Activated T-helper 1 cell treated with anti-CD3 and anti-CD28 coated beads, Interleukin-12 subunit alpha, Interleukin-12 subunit beta, Interleukin-2, Interleukin-4 antibody, amounts not matched to agents 30 ng/mL and 10 ng/mL and 1 ng/mL, durations not matched to agents 14 hours and 24 hours and 36 hours (primary cell): ENCODE measurements at regions of chr6 and their contacts with region 1.

Region 1: GRCh38 chr6:37018198-37019064 is 13.0 kb downstream of the FGD2 start:
- DNase-seq: peak; percentile 84
- H3K4me3 Mint-ChIP-seq: no peak overlapping the region
- H3K27ac Mint-ChIP-seq: peak overlapping the region; percentile 56
- H3K4me1 Mint-ChIP-seq: peaks cover 58% of the 10 kb centered on the region
- H3K27me3 Mint-ChIP-seq: no peaks in the 10 kb centered on the region

Region 2: GRCh38 chr6:36423101-36423824 is 595.2 kb before region 1 on chr6:
- intact Hi-C with region 1: no loop called
- DNase-seq: peak; percentile 97
- H3K4me3 Mint-ChIP-seq: peak overlapping the region; percentile 88
- H3K27ac Mint-ChIP-seq: peak overlapping the region; percentile 84
- H3K4me1 Mint-ChIP-seq: peaks cover 21% of the 10 kb centered on the region
- H3K27me3 Mint-ChIP-seq: peaks cover 11% of the 10 kb centered on the region

Region 3: DNA sequence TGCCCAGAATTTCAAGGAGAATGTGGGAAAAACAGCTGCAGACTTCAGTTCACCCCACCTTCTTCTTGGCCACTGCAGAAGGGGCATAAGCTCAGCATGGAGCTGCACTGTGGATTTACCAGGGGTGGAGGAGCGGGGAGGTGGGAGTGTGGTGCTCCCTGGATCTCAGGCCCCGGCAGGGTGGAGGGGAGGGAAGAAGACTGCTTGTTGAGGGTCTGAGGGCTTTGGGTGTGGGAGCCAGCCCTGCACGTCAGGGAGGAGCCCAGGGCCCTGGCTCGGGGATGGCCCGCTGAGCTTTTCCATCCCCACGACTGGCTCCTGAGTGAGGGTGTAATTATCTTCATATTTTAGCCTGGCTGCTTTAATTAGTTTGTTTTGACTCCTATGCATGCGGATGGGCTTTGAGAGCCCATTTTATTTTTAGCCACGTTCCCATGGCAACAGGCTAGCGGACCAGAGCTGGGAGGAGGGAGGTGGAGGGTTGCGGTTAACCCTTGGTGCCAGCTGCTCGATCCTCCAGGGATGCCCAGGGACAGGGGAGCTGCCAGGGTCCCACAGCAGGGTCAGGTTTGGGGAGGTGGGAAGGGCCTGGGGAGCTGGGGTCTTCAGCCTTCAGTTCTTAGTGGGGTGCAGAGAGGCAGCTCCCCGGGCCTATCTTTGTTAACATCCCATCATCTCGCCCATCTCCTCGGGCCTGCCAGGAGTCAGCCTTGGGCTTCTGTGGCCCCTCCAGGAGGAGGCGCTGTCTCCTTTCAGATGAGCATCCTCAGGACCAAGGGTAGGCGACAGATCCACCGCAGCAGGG is 252.6 kb before region 1 on chr6:
- intact Hi-C with region 1: loop called (anchors 1 kb)
- DNase-seq: peak; percentile 79
- H3K4me3 Mint-ChIP-seq: no peak overlapping the region
- H3K27ac Mint-ChIP-seq: no peak overlapping the region
- H3K4me1 Mint-ChIP-seq: peaks cover 39% of the 10 kb centered on the region
- H3K27me3 Mint-ChIP-seq: no peaks in the 10 kb centered on the region

Region 4: GRCh38 chr6:36885461-36886401 is 132.7 kb before region 1 on chr6 and contains the start of gene C6orf89:
- intact Hi-C with region 1: loop called (anchors 1 kb)
- DNase-seq: peak; percentile 94
- H3K4me3 Mint-ChIP-seq: peak within 1 kb of the TSS; percentile 91
- H3K27ac Mint-ChIP-seq: peak within 1 kb of the TSS; percentile 82
- H3K4me1 Mint-ChIP-seq: peaks cover 37% of the 10 kb centered on the region
- H3K27me3 Mint-ChIP-seq: no peaks in the 10 kb centered on the region
- total RNA-seq, gene C6orf89: 31.5 and 31.8 TPM in 2 replicates

Region 5: DNA sequence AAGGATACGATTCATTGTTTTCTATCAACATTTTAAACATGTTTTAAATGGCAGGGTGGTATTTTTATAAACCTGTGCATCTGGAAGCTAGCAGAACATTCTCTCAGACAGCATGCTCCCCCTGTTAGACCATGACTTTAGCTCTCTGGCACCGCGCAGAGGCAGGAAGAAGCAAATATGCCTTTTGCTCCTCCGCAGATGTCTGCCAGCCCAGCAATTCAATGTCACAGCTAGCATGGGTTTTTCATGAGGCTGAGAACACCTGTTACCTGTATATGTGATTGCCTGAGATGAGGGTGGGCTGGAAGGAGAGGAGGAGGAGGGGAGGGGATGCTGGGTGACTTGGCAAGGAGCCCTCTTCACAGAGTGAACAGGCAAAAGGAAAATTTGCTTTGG is 39.1 kb before region 1 on chr6:
- intact Hi-C with region 1: loop called (anchors 1 kb)
- DNase-seq: peak; percentile 21
- H3K4me3 Mint-ChIP-seq: no peak overlapping the region
- H3K27ac Mint-ChIP-seq: peak overlapping the region; percentile 54
- H3K4me1 Mint-ChIP-seq: peaks cover 32% of the 10 kb centered on the region
- H3K27me3 Mint-ChIP-seq: no peaks in the 10 kb centered on the region

Region 6: DNA sequence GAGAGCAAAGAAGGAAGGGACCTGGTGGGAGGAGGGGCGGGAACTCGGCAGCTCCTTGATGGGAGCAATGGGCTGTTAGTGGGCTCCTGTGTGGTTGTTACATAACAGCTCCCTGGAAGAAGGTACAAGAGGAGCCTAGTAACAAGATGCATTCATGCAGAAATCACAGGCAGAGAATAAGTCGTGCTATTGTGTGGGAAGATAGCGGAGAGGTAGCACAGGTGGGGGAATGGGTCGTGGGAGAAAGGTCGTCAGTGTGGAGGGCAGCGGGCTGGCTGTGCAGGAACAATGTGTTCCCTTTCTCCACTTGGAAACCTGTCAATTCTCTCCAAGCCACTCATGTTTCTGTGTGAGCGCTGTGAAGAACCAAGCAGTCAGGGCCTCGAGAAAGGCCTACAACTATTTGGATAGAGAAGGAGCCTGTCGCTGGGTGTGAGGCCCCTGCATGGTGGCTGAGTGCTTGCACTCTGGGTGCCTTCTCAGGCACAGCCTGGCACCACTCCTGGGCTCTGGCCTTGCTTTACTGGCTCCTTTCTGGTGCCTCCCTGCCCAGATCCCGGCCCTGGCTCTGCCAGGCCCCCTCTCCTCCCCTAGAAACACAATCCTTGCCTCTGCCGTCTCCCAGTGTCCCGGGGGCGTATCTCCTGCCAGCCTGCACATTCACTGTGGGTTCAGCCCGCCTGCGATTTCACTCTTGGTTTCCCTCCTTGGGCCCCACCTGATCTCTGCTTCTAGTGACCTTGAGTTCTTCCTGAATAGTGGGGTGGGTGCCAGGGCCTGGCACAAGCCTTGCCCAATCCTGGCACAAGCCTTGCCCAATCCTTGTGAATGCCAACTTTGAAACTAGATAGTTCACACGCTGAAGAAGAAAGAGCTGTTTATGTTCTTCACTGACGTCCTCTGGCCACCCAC is 20.4 kb before region 1 on chr6:
- intact Hi-C with region 1: no loop called
- DNase-seq: no peak
- H3K4me3 Mint-ChIP-seq: no peak overlapping the region
- H3K27ac Mint-ChIP-seq: no peak overlapping the region
- H3K4me1 Mint-ChIP-seq: no peaks in the 10 kb centered on the region
- H3K27me3 Mint-ChIP-seq: peaks cover 19% of the 10 kb centered on the region

Region 7: DNA sequence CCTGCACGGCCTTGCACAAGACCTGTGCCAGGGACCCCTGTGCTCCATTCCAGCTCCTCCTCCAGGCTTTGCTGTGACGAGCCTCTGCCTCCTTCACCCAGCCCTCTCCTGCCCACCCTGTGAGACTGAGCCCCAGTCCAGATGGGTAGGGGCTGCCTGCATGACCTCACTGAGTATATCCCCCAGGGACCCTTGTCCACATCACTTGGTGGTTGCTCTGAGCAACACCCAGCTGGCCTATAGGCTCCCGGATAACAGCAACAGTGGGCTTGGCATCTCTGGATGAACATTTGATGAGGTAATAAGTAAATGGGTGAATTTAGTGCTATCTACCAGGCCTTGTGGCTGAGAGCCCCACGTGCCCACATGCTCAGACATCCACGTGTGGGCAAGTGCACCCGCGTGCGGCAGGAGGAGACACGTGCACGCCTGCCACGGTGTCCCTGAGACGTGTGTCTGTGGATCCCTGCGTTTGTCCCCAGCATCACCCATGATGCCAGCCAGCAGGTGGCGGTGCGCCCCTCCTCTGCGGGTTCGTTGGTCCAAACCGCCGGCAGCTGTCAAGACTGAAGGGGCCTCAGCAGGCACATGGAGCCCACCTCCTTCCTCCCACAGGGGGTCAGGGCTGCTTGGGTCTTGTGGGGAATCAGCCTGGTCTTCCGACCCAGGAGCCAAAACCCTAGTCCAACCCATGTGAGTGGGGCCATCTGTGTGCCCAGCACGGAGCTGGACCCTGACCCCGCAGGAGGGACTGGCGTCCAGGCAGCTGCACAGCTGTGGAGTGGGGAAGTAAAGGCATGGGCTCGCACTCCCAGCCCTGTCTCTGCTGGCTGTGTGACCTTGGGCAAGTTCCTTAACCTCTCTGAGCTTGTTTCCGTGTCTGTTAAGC is 33.0 kb after region 1 on chr6:
- intact Hi-C with region 1: loop called (anchors 1 kb)
- DNase-seq: peak; percentile 82
- H3K4me3 Mint-ChIP-seq: peak overlapping the region; percentile 92
- H3K27ac Mint-ChIP-seq: peak overlapping the region; percentile 99
- H3K4me1 Mint-ChIP-seq: peaks cover 70% of the 10 kb centered on the region
- H3K27me3 Mint-ChIP-seq: no peaks in the 10 kb centered on the region

Region 8: GRCh38 chr6:37257634-37258404 is 239.4 kb after region 1 on chr6 and contains the starts of genes TBC1D22B and TMEM217:
- intact Hi-C with region 1: loop called (anchors 1 kb)
- DNase-seq: peak; percentile 95
- H3K4me3 Mint-ChIP-seq: peak within 1 kb of the TSS; percentile 97
- H3K27ac Mint-ChIP-seq: peak within 1 kb of the TSS; percentile 100
- H3K4me1 Mint-ChIP-seq: peaks cover 78% of the 10 kb centered on the region
- H3K27me3 Mint-ChIP-seq: no peaks in the 10 kb centered on the region
- total RNA-seq, gene TBC1D22B: 20.8 and 21.2 TPM in 2 replicates
- total RNA-seq, gene TMEM217: 7.7 and 9.9 TPM in 2 replicates

Region 9: DNA sequence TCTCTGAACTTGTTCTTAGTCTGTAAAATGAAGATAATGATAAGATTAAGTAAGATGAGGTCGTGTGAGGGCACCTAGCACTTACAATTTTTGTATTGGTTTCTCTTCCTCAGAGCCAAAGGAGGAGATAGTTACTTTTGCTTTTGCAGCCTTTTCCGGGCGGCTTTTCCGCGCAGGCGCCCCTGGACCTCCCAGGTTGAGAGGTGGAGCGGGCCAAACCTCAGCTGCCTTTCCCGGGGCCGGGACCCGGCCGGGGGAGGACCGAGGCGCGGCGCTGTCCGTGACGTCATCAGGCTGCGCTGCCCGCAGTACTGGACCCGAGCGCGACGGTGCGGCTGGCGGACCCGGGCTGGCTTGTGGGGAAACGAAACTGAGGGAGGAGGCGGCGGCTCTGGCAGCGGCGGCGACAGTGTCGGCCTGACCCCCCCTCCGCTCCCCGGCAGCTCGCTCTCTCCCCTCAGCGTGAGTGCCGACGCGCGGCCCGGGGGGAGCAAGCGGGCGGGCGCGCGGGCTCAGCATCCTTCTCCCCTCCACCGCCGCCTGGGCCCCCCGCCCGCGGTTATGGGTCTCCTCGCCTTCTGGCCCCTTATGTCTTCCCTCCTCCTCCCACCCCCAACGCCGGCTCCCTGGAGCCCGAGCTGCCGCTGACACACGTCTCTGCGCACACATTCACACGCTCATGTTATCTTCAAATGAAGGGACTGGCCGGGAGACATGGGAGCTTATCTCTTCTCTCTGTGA is 414.7 kb after region 1 on chr6 and contains the start of gene CMTR1:
- intact Hi-C with region 1: loop called (anchors 10 kb)
- DNase-seq: peak; percentile 99
- H3K4me3 Mint-ChIP-seq: peak within 1 kb of the TSS; percentile 96
- H3K27ac Mint-ChIP-seq: peak within 1 kb of the TSS; percentile 98
- H3K4me1 Mint-ChIP-seq: peaks cover 41% of the 10 kb centered on the region
- H3K27me3 Mint-ChIP-seq: peaks cover 5% of the 10 kb centered on the region
- total RNA-seq, gene CMTR1: 53.5 and 54.4 TPM in 2 replicates